ENCODE measurements at regions of chr12 and their contacts with region 1.

Region 1: DNA sequence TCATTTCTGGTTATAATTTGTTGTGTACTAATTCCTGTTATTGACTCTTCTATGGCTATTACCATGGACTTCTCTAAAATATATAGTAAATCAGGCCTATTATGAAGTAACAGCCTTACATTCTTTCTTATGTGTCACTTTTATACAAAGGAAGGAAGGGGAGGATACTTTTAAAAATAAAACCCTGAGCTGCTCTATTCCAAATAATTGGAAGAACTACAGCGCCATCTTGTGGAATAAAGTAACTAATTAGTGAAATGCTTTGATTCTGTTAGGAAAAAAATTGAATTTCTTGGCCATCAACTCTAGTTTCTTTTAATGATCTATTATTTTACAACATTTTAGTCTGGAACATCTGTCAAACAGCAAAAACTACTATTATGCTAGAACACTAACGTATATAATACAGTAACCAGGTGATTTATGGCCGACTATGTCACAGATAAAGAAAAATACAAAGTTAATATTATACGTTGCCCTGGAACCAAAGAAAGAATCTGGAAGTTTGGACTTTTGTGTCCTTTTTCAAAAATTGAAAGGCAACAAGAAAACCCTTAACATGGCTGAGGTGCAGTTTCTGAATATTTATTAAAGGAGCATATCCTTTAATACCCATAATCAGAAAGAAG is 55.0 kb upstream of the NELL2 start:
- DNase-seq: peak; percentile 37 to 53
- ATAC-seq: peak; percentile 30 to 80; a peak in 4 of 6 replicates
- H3K4me3 ChIP-seq: no peak overlapping the region
- H3K27ac ChIP-seq: no peak overlapping the region
- H3K4me1 ChIP-seq: no peaks in the 10 kb centered on the region
- CTCF ChIP-seq: peak; percentile 85
- EP300 ChIP-seq: no peak
- POLR2A ChIP-seq: no peak
- RAD21 ChIP-seq: peak; percentile 78 to 82

Region 2: DNA sequence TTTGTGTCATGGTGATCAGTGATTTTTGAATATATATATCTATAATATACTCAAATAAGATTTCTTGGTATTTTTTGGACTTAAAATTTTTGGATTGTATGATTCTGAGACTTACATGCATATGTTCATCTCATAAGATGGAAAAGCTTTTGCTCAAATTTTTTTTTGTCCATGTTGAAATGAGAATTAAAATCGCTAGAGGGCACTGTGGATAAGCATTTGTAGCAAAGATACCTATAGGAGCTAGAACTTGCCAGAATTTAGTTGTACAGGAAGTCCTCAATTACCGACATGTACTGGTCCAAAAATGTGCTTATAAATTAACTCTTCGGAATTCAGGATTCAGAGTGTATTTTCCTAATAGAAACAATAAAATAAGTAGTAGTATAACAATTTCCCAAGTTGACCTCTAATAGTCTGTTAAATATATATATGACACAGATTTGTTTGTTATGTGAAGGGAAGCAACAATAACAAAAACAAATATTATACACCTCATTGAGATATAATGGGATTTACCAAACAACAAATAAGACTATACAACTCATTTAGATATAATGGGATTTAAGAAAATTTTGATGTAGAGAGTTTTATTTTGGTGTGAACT is 915.6 kb before region 1 on chr12:
- CTCF ChIA-PET with region 1: interaction called, 12 read pairs
- POLR2A ChIA-PET with region 1: no interaction called
- DNase-seq: peak; percentile 11 to 57
- ATAC-seq: peak; percentile 70 to 77; a peak in 4 of 6 replicates
- H3K4me3 ChIP-seq: no peak overlapping the region
- H3K27ac ChIP-seq: no peak overlapping the region
- H3K4me1 ChIP-seq: no peaks in the 10 kb centered on the region
- CTCF ChIP-seq: peak; percentile 79
- EP300 ChIP-seq: no peak
- POLR2A ChIP-seq: no peak
- RAD21 ChIP-seq: peak; percentile 76 to 80

Region 3: GRCh38 chr12:44875954-44876553 is 55.0 kb before region 1 on chr12 and contains the start of gene NELL2:
- CTCF ChIA-PET with region 1: interaction called, 11 read pairs
- POLR2A ChIA-PET with region 1: no interaction called
- DNase-seq: peak; percentile 32 to 49
- ATAC-seq: peak; percentile 89 to 93
- H3K4me3 ChIP-seq: peak within 1 kb of the TSS; percentile 50
- H3K27ac ChIP-seq: no peak within 1 kb of the TSS
- H3K4me1 ChIP-seq: peaks cover 13% of the 10 kb centered on the region
- CTCF ChIP-seq: no peak
- EP300 ChIP-seq: no peak
- POLR2A ChIP-seq: no peak
- RAD21 ChIP-seq: no peak
- polyA plus RNA-seq, gene NELL2: 0.16 and 0.30 TPM in 2 replicates